GM10248 (cell line): ENCODE measurements at regions of chr1 and their contacts with region 1.

Region 1: DNA sequence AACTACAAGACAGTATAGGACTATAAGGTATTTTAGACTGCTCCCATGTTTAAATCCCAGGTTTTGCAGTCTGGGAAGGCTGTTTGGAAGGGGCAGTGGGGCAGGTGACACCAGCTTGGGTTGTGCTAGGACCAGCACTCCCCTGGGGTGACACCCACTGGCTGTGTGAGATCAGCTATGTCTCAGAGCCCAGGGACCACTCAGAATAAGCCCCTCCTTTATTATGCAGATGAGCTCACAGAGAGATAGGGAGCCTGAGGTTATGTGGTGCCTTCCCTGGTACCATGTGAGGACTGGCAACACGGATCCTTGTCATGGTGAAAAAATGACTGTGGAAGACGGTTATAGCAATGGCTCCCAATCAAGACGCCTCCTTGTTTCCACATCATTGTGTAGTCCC is 71.0 kb downstream of the NENF start:
- DNase-seq: no peak
- CTCF ChIP-seq: no peak

Region 2: GRCh38 chr1:212558693-212559480 is 55.2 kb after region 1 on chr1:
- CTCF ChIA-PET with region 1: no interaction called
- POLR2A ChIA-PET with region 1: interaction called, 12 read pairs
- DNase-seq: peak; percentile 96
- CTCF ChIP-seq: no peak

Region 3: DNA sequence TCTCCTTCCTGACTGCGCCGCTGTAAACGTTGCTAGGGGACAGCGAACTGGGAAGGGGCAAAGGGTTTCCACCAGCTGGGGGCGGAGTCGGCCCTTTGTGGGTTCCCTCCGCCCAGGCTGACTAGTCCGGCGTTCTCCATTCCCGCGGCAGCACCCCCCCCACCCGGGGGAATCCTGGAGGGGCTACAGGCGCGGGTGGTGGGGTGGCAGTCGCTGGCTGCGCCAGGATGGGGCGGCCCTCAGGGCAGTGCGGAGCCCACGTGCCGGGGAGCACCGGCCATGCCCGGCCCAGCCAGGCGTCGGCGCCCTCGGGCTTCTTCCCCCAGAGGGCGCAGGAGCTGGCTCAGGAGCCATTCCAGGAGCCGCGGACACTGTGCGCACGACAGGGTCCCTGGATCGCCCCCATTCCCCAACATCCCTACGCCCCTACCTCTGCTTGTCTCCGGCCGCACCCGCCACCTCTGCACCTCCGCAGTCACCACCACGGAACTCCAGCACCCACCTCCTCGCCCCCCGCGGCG is 195.4 kb after region 1 on chr1:
- CTCF ChIA-PET with region 1: no interaction called
- POLR2A ChIA-PET with region 1: no interaction called
- DNase-seq: peak; percentile 79
- CTCF ChIP-seq: peak; percentile 69